ENCODE measurements at regions of chr6 and their contacts with region 1.

Region 1: GRCh38 chr6:150334790-150335783 is 33.7 kb upstream of the IYD start:
- DNase-seq: peak; percentile 67
- H3K4me3 ChIP-seq: no peak overlapping the region
- H3K27ac ChIP-seq: peak overlapping the region; percentile 59
- H3K4me1 ChIP-seq: peaks cover 26% of the 10 kb centered on the region
- H3K27me3 ChIP-seq: no peaks in the 10 kb centered on the region
- CTCF ChIP-seq: peak; percentile 82 to 88

Region 2: DNA sequence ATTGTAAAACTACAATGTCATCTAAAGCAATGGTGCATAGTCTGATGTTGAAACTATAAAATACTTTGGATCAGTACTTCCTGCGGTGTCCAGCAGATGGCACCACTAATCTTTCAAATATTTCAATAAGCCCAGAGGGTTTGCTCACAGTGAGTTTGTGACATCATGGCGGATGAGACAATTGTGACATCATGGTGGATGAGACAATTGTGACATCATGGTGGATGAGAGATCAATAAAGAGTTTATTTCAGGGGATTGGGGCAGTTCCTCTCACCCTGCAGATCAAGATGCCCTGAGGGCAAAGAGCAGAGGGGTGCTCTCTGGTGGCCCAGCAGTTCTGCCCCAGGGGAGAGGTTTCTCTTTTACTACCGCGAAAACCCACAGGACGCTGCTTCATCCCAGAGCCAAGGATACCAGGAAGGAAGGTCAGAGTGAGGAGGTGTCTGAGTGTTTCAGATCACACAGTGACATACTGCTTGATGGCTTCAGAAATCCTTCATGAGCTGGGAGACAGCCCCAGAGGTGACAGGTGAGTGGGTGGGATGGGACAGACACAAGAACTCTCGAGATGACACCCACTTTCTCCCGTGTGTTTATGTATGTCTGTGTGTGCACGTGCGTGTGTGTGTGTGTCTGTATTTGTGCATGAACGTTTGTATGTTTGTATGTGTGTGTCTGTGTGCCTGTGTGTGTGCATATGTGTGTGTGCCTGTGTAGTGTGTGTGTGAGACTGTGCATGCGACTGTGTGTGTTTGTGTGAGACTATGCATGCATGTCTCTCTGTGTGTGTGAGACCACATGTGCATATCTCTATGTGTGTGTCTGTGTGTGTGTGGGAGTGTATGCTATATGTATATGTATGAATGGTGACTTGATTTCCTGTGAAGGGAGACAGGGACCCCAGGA is 400.6 kb before region 1 on chr6:
- CTCF ChIA-PET with region 1: no interaction called
- dilution Hi-C with region 1: no loop called
- in situ Hi-C with region 1: no loop called
- intact Hi-C with region 1: loop called (anchors 5 kb)
- DNase-seq: peak; percentile 56
- H3K4me3 ChIP-seq: no peak overlapping the region
- H3K27ac ChIP-seq: no peak overlapping the region
- H3K4me1 ChIP-seq: peaks cover 11% of the 10 kb centered on the region
- H3K27me3 ChIP-seq: no peaks in the 10 kb centered on the region
- CTCF ChIP-seq: peak; percentile 67 to 70

Region 3: GRCh38 chr6:150079604-150080003 is 255.5 kb before region 1 on chr6:
- CTCF ChIA-PET with region 1: interaction called, 4 read pairs
- dilution Hi-C with region 1: no loop called
- in situ Hi-C with region 1: loop called (anchors 5 kb)
- intact Hi-C with region 1: loop called (anchors 1 kb)
- DNase-seq: no peak
- H3K4me3 ChIP-seq: no peak overlapping the region
- H3K27ac ChIP-seq: no peak overlapping the region
- H3K4me1 ChIP-seq: peaks cover 8% of the 10 kb centered on the region
- H3K27me3 ChIP-seq: no peaks in the 10 kb centered on the region
- CTCF ChIP-seq: no peak

Region 4: GRCh38 chr6:150142670-150143515 is 192.2 kb before region 1 on chr6 and contains the start of gene PPP1R14C:
- CTCF ChIA-PET with region 1: no interaction called
- dilution Hi-C with region 1: no loop called
- in situ Hi-C with region 1: no loop called
- intact Hi-C with region 1: loop called (anchors 1 kb)
- DNase-seq: peak; percentile 84
- H3K4me3 ChIP-seq: peak within 1 kb of the TSS; percentile 90 to 95 (median 91)
- H3K27ac ChIP-seq: peak within 1 kb of the TSS; percentile 73
- H3K4me1 ChIP-seq: peaks cover 26% of the 10 kb centered on the region
- H3K27me3 ChIP-seq: no peaks in the 10 kb centered on the region
- CTCF ChIP-seq: no peak
- total RNA-seq, gene PPP1R14C: 46.8 to 56.2 TPM

Region 5: GRCh38 chr6:150267686-150268561 is 67.2 kb before region 1 on chr6:
- CTCF ChIA-PET with region 1: no interaction called
- dilution Hi-C with region 1: no loop called
- in situ Hi-C with region 1: no loop called
- intact Hi-C with region 1: loop called (anchors 1 kb)
- DNase-seq: peak; percentile 91
- H3K4me3 ChIP-seq: no peak overlapping the region
- H3K27ac ChIP-seq: peak overlapping the region; percentile 99
- H3K4me1 ChIP-seq: peaks cover 65% of the 10 kb centered on the region
- H3K27me3 ChIP-seq: no peaks in the 10 kb centered on the region
- CTCF ChIP-seq: peak in 1 of 2 donors; percentile 35

Region 6: DNA sequence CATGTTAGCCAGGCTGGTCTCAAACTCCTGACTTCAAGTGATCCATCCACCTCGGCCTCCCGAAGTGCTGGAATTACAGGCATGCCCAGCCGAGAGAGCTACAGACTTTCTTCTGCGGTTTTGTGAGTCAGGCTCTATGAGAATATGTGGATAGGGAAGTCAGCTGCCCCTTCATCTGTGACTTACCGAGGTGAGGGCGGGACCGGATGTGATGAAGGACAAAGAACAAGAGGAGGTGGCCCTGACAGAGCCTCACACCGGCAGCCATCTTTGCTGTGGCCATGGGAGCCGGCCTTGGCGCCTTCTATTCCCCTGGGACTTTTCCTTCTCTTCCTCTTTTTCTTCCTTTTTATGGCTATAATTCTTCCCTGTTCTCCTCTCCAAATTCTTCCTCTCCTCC is 100.7 kb after region 1 on chr6:
- CTCF ChIA-PET with region 1: no interaction called
- dilution Hi-C with region 1: no loop called
- in situ Hi-C with region 1: no loop called
- intact Hi-C with region 1: no loop called
- DNase-seq: no peak
- H3K4me3 ChIP-seq: no peak overlapping the region
- H3K27ac ChIP-seq: no peak overlapping the region
- H3K4me1 ChIP-seq: no peaks in the 10 kb centered on the region
- H3K27me3 ChIP-seq: no peaks in the 10 kb centered on the region
- CTCF ChIP-seq: no peak

Region 7: GRCh38 chr6:150499882-150500312 is 164.8 kb after region 1 on chr6:
- CTCF ChIA-PET with region 1: no interaction called
- dilution Hi-C with region 1: no loop called
- in situ Hi-C with region 1: no loop called
- intact Hi-C with region 1: no loop called
- DNase-seq: no peak
- H3K4me3 ChIP-seq: no peak overlapping the region
- H3K27ac ChIP-seq: no peak overlapping the region
- H3K4me1 ChIP-seq: no peaks in the 10 kb centered on the region
- H3K27me3 ChIP-seq: no peaks in the 10 kb centered on the region
- CTCF ChIP-seq: no peak